ENCODE measurements at regions of chr6 and their contacts with region 1.

Region 1: DNA sequence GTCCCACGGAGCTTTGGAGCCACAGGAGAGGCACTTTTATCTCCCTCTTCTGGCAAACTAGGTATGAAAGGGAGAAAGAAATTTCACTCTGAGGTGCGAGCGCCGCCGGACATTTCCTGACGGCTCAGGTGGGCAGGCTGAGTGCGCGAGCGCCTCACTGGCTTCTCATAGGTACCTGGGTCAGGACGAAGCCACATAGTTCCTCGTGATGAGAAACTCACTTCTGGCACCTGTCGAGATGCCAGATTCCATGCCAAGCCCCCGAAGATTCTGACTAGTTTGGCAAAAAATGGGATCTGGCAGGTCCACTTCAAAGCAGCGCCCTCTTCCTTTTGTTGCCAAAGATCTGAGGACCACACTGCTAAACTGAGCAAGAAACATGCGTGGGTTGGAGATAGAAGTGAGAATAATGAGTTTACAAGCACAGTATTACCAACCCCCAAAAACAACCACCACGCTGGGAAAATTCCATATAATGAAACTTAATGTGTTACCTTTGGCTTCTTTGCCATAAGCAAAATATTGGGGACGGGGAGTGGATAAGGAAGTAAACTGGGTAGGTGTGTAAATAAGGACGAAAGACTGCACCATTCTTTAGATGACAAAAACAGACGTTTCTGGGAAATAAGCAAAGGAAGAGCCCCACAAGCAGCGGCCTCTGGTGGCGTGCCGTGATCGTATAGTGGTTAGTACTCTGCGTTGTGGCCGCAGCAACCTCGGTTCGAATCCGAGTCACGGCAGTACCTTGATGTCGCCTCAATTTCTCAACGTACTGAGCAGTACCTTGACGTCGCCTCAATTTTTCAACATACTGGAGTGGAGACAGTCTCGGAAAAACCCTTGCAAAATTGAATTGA is 89.8 kb upstream of the PRSS16 start:
- DNase-seq: no peak
- H3K4me3 ChIP-seq: peak overlapping the region; percentile 62
- H3K27ac ChIP-seq: no peak overlapping the region
- H3K27me3 ChIP-seq: no peaks in the 10 kb centered on the region
- CTCF ChIP-seq: peak; percentile 62

Region 2: DNA sequence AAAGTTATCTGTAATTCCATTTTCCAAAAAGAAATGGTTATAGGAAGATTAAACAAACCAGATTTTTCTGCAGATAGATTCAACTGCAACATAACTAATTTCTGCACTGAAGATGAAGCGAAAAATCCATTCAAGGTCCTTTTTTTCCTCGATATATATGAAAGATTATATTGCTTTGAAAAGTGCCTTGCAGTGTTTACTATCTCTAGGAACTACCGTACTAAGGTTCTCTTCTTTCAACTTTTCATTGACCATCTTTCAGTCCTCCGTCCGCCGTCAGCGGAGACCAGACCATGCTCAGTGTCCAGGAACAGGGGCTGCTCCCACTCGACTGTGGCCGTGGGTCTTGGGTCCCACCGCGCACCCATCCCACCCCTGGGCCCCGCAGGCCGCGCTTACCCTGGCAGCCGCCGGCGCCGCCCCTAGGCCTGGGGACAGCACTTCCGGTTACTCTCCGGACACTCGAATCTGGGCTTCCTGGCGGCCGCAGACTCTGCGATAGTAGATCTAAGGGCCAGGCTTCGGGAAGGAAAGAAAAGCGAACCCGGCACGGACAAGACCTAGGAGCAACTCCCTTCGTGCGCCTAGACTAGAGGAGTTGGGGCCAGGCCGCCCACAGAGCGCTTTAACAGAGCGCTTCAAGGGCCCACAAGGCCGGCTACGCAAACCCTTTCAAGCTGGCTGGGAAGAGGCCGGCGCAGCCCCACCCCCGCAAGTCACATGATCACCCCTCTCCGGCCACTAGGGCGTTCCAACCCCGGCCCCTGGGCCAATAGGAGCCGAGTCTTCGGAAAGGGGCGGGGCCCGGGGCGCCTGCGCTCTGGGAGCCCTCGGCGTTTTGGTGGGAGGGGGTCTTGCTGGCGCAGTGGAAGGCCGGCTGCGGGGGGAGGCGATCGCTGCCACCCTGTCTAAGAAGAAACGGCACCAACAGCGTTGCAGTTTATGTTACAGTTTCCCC is 498.4 kb before region 1 on chr6 and contains the start of gene ZNF322:
- CTCF ChIA-PET with region 1: no interaction called
- POLR2A ChIA-PET with region 1: no interaction called
- DNase-seq: peak; percentile 78
- H3K4me3 ChIP-seq: peak within 1 kb of the TSS; percentile 73
- H3K27ac ChIP-seq: peak within 1 kb of the TSS; percentile 59
- H3K27me3 ChIP-seq: no peaks in the 10 kb centered on the region
- CTCF ChIP-seq: no peak
- polyA plus RNA-seq, gene ZNF322: 13.3 and 19.5 TPM in 2 replicates

Region 3: GRCh38 chr6:27138837-27139755 is 18.6 kb before region 1 on chr6:
- CTCF ChIA-PET with region 1: no interaction called
- POLR2A ChIA-PET with region 1: no interaction called
- DNase-seq: no peak
- H3K4me3 ChIP-seq: peak overlapping the region; percentile 81
- H3K27ac ChIP-seq: peak overlapping the region; percentile 79
- H3K27me3 ChIP-seq: no peaks in the 10 kb centered on the region
- CTCF ChIP-seq: no peak

Region 4: GRCh38 chr6:27177485-27178406 is 20.1 kb after region 1 on chr6:
- CTCF ChIA-PET with region 1: interaction called, 23 read pairs
- POLR2A ChIA-PET with region 1: interaction called, 5 read pairs
- DNase-seq: peak; percentile 85
- H3K4me3 ChIP-seq: peak overlapping the region; percentile 95
- H3K27ac ChIP-seq: peak overlapping the region; percentile 96
- H3K27me3 ChIP-seq: peaks cover 4% of the 10 kb centered on the region
- CTCF ChIP-seq: peak; percentile 52

Region 5: GRCh38 chr6:27414996-27415395 is 257.3 kb after region 1 on chr6:
- CTCF ChIA-PET with region 1: no interaction called
- POLR2A ChIA-PET with region 1: no interaction called
- DNase-seq: no peak
- H3K4me3 ChIP-seq: no peak overlapping the region
- H3K27ac ChIP-seq: no peak overlapping the region
- H3K27me3 ChIP-seq: no peaks in the 10 kb centered on the region
- CTCF ChIP-seq: no peak

Region 6: GRCh38 chr6:27795697-27796494 is 638.2 kb after region 1 on chr6:
- CTCF ChIA-PET with region 1: interaction called, 22 read pairs
- POLR2A ChIA-PET with region 1: no interaction called
- DNase-seq: peak; percentile 84
- H3K4me3 ChIP-seq: no peak overlapping the region
- H3K27ac ChIP-seq: no peak overlapping the region
- H3K27me3 ChIP-seq: no peaks in the 10 kb centered on the region
- CTCF ChIP-seq: peak; percentile 83

Measured in AG04450 (cell line).